Panc1 (cell line): ENCODE measurements at regions of chr1 and their contacts with region 1.

Region 1: DNA sequence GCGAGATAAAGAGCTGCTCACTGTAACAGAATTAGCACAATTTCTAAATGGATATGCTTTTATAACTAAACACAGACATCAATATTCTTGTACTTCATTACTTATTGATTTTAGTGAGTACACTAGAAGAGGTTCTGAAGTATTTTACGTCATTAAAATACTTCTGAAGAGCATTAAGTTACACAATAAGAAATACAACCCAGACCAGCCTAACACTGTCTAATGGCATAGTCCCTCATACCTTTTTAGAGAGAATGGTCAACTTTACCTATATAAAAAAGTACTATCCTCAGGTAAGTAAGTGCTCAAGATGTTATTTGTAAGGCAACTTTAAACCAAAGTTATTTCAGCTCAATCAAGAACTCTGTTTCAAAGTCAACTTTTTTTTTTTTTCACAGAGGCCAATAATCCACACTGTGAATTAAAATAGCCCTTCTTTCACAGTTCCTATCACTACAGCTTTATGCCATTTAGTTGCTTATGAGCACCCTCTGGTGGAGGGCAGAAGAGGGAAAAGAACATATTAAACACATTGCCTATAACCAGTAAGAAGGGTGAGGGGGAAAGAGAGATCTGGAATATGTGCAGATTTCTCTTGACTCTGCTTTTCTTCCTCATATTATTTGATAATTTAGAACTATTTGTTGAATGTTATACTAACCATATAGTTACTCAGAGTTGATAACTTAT is 182.1 kb upstream of the DMRTA2 start:
- DNase-seq: peak; percentile 41
- ATAC-seq: peak; percentile 83
- H3K4me3 ChIP-seq: no peak overlapping the region
- H3K27ac ChIP-seq: no peak overlapping the region
- H3K4me1 ChIP-seq: peaks cover 17% of the 10 kb centered on the region; the same call in 1 of the 2 replicates
- H3K27me3 ChIP-seq: no peaks in the 10 kb centered on the region
- CTCF ChIP-seq: peak; percentile 64; the same call in 1 of the 2 replicates

Region 2: GRCh38 chr1:50368179-50369012 is 236.9 kb before region 1 on chr1:
- CTCF ChIA-PET with region 1: interaction called, 4 read pairs
- POLR2A ChIA-PET with region 1: no interaction called
- in situ Hi-C with region 1: no loop called
- intact Hi-C with region 1: loop called (anchors 1 kb)
- DNase-seq: peak; percentile 13
- ATAC-seq: peak; percentile 92
- H3K4me3 ChIP-seq: peak overlapping the region; percentile 7 to 23; a peak in 2 of 4 replicates
- H3K27ac ChIP-seq: no peak overlapping the region
- H3K4me1 ChIP-seq: peaks cover 3% of the 10 kb centered on the region; the same call in 1 of the 2 replicates
- H3K27me3 ChIP-seq: peaks cover 15% of the 10 kb centered on the region
- CTCF ChIP-seq: peak; percentile 91

Region 3: GRCh38 chr1:50503515-50503914 is 101.8 kb before region 1 on chr1:
- CTCF ChIA-PET with region 1: no interaction called
- POLR2A ChIA-PET with region 1: interaction called, 10 read pairs
- in situ Hi-C with region 1: no loop called
- intact Hi-C with region 1: no loop called
- DNase-seq: no peak
- ATAC-seq: no peak
- H3K4me3 ChIP-seq: no peak overlapping the region
- H3K27ac ChIP-seq: no peak overlapping the region
- H3K4me1 ChIP-seq: no peaks in the 10 kb centered on the region
- H3K27me3 ChIP-seq: no peaks in the 10 kb centered on the region
- CTCF ChIP-seq: no peak

Region 4: DNA sequence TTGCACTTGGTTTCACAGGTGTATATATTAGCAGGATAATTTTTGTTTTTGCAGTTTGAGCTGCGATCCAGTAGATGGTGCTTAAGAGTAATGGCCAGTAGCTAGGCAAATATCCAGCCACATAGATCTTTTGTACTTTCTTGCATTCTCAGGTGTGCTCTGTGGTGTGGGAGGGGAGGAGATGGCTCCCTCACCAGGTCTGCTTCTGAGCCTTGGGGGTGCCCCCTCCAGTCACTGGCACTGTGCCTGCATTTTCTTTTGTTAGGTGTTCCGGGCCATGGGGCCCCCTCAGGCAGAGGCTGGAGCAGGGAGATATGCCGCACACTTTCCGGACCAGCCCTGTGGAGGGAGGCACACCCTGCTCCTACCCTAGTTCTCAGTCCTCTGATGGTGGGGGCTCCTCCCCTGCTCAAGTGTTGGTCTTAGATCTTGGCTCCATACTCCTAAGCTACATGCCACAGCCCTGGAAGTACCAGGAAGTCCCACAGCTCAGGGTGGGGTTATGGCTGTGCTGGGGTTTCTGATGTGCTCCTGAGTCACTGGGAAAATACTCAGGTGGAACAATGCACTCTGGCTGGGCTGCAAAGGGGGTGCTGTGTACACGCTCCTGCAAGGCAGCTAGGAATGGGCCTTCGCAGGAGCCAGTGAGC is 15.5 kb after region 1 on chr1:
- CTCF ChIA-PET with region 1: interaction called, 17 read pairs
- POLR2A ChIA-PET with region 1: no interaction called
- in situ Hi-C with region 1: no loop called
- intact Hi-C with region 1: no loop called
- DNase-seq: no peak
- ATAC-seq: peak; percentile 86
- H3K4me3 ChIP-seq: no peak overlapping the region
- H3K27ac ChIP-seq: no peak overlapping the region
- H3K4me1 ChIP-seq: no peaks in the 10 kb centered on the region
- H3K27me3 ChIP-seq: no peaks in the 10 kb centered on the region
- CTCF ChIP-seq: peak; percentile 78